Mammary epithelial cell (primary cell): ENCODE measurements at regions of chr6 and their contacts with region 1.

Region 1: GRCh38 chr6:3518356-3519225 is 61.7 kb upstream of the SLC22A23 start:
- DNase-seq: peak; percentile 94
- H3K4me3 ChIP-seq: no peak overlapping the region
- H3K27ac ChIP-seq: peak overlapping the region; percentile 79
- H3K4me1 ChIP-seq: peaks cover 39% of the 10 kb centered on the region
- H3K27me3 ChIP-seq: no peaks in the 10 kb centered on the region
- CTCF ChIP-seq: no peak

Region 2: GRCh38 chr6:3433005-3433404 is 85.6 kb before region 1 on chr6:
- CTCF ChIA-PET with region 1: no interaction called
- dilution Hi-C with region 1: loop called (anchors 5 kb)
- in situ Hi-C with region 1: no loop called
- intact Hi-C with region 1: no loop called
- DNase-seq: no peak
- H3K4me3 ChIP-seq: peak overlapping the region in 1 of 3 experiments; percentile 12
- H3K27ac ChIP-seq: peak overlapping the region; percentile 64
- H3K4me1 ChIP-seq: peaks cover 41% of the 10 kb centered on the region
- H3K27me3 ChIP-seq: no peaks in the 10 kb centered on the region
- CTCF ChIP-seq: no peak

Region 3: GRCh38 chr6:3444276-3445088 is 74.1 kb before region 1 on chr6:
- CTCF ChIA-PET with region 1: no interaction called
- dilution Hi-C with region 1: no loop called
- in situ Hi-C with region 1: no loop called
- intact Hi-C with region 1: no loop called
- DNase-seq: no peak
- H3K4me3 ChIP-seq: no peak overlapping the region
- H3K27ac ChIP-seq: no peak overlapping the region
- H3K4me1 ChIP-seq: peaks cover 24% of the 10 kb centered on the region
- H3K27me3 ChIP-seq: no peaks in the 10 kb centered on the region
- CTCF ChIP-seq: no peak

Region 4: DNA sequence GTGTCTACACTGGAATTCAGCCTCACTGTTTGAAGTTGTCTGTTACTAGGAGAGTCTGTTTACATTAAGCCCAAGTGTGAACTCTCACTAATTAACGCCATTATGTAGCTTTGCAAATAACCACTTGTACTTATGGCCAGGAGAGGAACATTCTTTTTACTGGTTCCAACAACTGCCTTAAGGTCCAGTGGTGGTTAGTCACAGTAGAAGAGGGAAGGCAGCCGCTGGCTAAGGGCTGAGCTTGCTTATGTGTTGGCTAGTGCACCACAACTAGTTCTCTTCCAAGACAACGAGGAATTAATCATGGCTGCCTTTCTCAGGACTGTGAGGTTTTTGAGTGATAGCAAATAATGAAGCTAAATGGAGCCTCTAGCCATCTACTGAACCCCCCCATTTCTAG is 46.9 kb before region 1 on chr6:
- CTCF ChIA-PET with region 1: no interaction called
- dilution Hi-C with region 1: no loop called
- in situ Hi-C with region 1: no loop called
- intact Hi-C with region 1: no loop called
- DNase-seq: peak; percentile 39
- H3K4me3 ChIP-seq: no peak overlapping the region
- H3K27ac ChIP-seq: no peak overlapping the region
- H3K4me1 ChIP-seq: peaks cover 7% of the 10 kb centered on the region
- H3K27me3 ChIP-seq: no peaks in the 10 kb centered on the region
- CTCF ChIP-seq: no peak

Region 5: DNA sequence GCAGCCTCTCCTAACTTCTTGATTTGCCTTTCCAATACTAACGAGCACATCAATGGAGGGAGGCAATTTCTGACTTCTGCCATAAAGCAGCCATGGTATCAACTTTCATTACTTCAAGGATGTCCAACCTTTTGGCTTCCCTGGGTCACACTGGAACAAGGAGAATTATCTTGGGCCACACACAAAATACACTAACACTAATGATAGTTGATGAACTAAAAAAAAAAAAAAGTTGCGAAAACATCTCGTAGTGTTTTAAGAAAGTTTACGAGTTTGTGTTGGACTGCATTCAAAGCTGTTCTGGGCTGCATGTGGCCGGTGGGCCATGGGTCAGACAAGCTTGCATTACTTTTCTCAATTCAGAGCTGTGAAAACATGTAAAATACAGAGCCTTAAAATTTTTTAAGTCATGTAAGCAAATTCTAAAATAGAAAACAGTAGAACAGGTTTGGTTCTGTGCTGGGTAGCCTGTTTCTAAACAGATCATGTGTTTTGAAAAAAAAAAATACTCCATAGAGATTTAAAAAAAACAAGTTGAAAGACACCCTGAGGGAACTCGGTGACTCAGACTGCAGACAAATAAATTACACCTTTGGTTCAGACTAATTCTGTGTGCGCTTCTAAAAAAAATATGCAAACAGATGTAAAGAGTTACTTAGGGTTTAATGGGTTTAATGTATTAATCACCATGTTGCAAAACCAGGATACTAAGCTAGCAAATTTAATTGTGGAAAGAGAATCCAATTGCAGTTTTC is 18.2 kb before region 1 on chr6:
- CTCF ChIA-PET with region 1: no interaction called
- dilution Hi-C with region 1: no loop called
- in situ Hi-C with region 1: no loop called
- intact Hi-C with region 1: loop called (anchors 1 kb)
- DNase-seq: peak; percentile 92
- H3K4me3 ChIP-seq: no peak overlapping the region
- H3K27ac ChIP-seq: peak overlapping the region; percentile 23
- H3K4me1 ChIP-seq: peaks cover 17% of the 10 kb centered on the region
- H3K27me3 ChIP-seq: no peaks in the 10 kb centered on the region
- CTCF ChIP-seq: no peak

Region 6: GRCh38 chr6:3561725-3562124 is 43.1 kb after region 1 on chr6:
- CTCF ChIA-PET with region 1: no interaction called
- dilution Hi-C with region 1: no loop called
- in situ Hi-C with region 1: no loop called
- intact Hi-C with region 1: no loop called
- DNase-seq: no peak
- H3K4me3 ChIP-seq: no peak overlapping the region
- H3K27ac ChIP-seq: no peak overlapping the region
- H3K4me1 ChIP-seq: no peaks in the 10 kb centered on the region
- H3K27me3 ChIP-seq: no peaks in the 10 kb centered on the region
- CTCF ChIP-seq: peak; percentile 5 to 35

Region 7: GRCh38 chr6:3592371-3592941 is 73.9 kb after region 1 on chr6:
- CTCF ChIA-PET with region 1: no interaction called
- dilution Hi-C with region 1: loop called (anchors 5 kb)
- in situ Hi-C with region 1: no loop called
- intact Hi-C with region 1: loop called (anchors 5 kb)
- DNase-seq: peak; percentile 100
- H3K4me3 ChIP-seq: no peak overlapping the region
- H3K27ac ChIP-seq: peak overlapping the region; percentile 88
- H3K4me1 ChIP-seq: peaks cover 18% of the 10 kb centered on the region
- H3K27me3 ChIP-seq: no peaks in the 10 kb centered on the region
- CTCF ChIP-seq: no peak

Region 8: GRCh38 chr6:3612341-3613041 is 93.9 kb after region 1 on chr6:
- CTCF ChIA-PET with region 1: no interaction called
- dilution Hi-C with region 1: no loop called
- in situ Hi-C with region 1: no loop called
- intact Hi-C with region 1: loop called (anchors 2 kb)
- DNase-seq: peak; percentile 95
- H3K4me3 ChIP-seq: no peak overlapping the region
- H3K27ac ChIP-seq: peak overlapping the region; percentile 69
- H3K4me1 ChIP-seq: peaks cover 31% of the 10 kb centered on the region
- H3K27me3 ChIP-seq: no peaks in the 10 kb centered on the region
- CTCF ChIP-seq: no peak